Cardiac septum (tissue), 1 donor: ENCODE measurements at regions of chr10 and their contacts with region 1.

Region 1: GRCh38 chr10:60572511-60573194 is 183.0 kb upstream of the ANK3 start:
- DNase-seq: no peak

Region 2: GRCh38 chr10:60444494-60445064 is 128.1 kb before region 1 on chr10:
- intact Hi-C with region 1: loop called (anchors 10 kb)
- DNase-seq: no peak